ENCODE measurements at regions of chr3 and their contacts with region 1.

Region 1: DNA sequence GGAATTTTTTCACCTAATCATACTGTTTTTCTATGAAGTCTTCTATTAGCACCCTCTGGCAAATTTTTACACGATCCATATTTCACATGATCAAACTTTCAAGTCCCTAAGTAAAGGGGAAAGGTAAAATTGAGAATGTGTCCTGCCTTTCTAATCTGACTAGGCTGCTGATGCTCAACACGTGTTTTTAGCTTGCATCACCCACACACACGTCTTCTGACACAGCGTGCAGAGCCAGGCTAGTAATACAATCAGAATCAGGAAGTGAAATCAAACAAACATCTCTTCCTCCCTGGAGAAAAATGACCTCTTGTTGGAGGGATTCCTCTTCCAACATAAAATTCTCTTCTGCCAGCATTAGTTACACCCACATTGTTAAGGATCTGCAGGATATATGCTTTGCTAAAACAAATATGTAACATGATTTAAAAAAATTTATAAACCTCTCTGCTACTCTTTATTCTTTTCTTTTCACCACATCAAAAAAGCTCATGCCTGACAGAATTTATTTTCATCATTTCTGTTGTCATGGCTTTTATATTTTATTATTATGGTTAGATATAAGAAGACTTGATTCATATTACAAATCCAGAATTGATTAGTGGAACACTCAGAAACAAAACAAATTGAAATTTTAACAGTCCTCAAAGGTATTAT is 122.4 kb downstream of the RAP2B start:
- DNase-seq: peak in 7 of 9 donors; percentile 7 to 53 (median 40)
- ATAC-seq: peak; percentile 85
- H3K4me3 ChIP-seq: no peak overlapping the region
- H3K4me3 Mint-ChIP-seq: peak overlapping the region; percentile 2 to 78 (median 54)
- H3K27ac ChIP-seq: peak overlapping the region; percentile 1
- H3K27ac Mint-ChIP-seq: peak overlapping the region; percentile 60 to 92 (median 74)
- H3K4me1 ChIP-seq: peaks cover 13 to 29% of the 10 kb centered on the region in 2 donors
- H3K4me1 Mint-ChIP-seq: peaks cover 25 to 48% (median 43%) of the 10 kb centered on the region in 7 donors
- H3K27me3 ChIP-seq: no peaks in the 10 kb centered on the region
- H3K27me3 Mint-ChIP-seq: no peaks in the 10 kb centered on the region

Region 2: GRCh38 chr3:153209596-153209995 is 74.8 kb before region 1 on chr3:
- CTCF ChIA-PET with region 1: interaction called, 17 read pairs
- POLR2A ChIA-PET with region 1: no interaction called
- intact Hi-C with region 1: loop called in 1 of 2 experiments (anchors 1 kb)
- DNase-seq: no peak
- ATAC-seq: peak; percentile 85
- H3K4me3 ChIP-seq: no peak overlapping the region
- H3K4me3 Mint-ChIP-seq: peak overlapping the region in 9 of 10 donors; percentile 20 to 80 (median 72)
- H3K27ac ChIP-seq: no peak overlapping the region
- H3K27ac Mint-ChIP-seq: peak overlapping the region in 7 of 9 donors; percentile 0 to 87 (median 71)
- H3K4me1 ChIP-seq: peaks cover 6 to 14% of the 10 kb centered on the region in 2 donors
- H3K4me1 Mint-ChIP-seq: peaks cover 15 to 60% (median 45%) of the 10 kb centered on the region in 7 donors
- H3K27me3 ChIP-seq: no peaks in the 10 kb centered on the region
- H3K27me3 Mint-ChIP-seq: peaks cover 0 to 1% (median 0%) of the 10 kb centered on the region in 5 donors

Region 3: GRCh38 chr3:153595186-153595815 is 310.9 kb after region 1 on chr3:
- CTCF ChIA-PET with region 1: no interaction called
- POLR2A ChIA-PET with region 1: no interaction called
- intact Hi-C with region 1: loop called in 1 of 2 experiments (anchors 5 kb)
- DNase-seq: peak in 5 of 9 donors; percentile 1 to 25 (median 11)
- ATAC-seq: peak; percentile 45
- H3K4me3 ChIP-seq: no peak overlapping the region
- H3K4me3 Mint-ChIP-seq: no peak overlapping the region
- H3K27ac ChIP-seq: no peak overlapping the region
- H3K27ac Mint-ChIP-seq: no peak overlapping the region
- H3K4me1 ChIP-seq: no peaks in the 10 kb centered on the region
- H3K4me1 Mint-ChIP-seq: peaks cover 0 to 15% (median 6%) of the 10 kb centered on the region in 7 donors
- H3K27me3 ChIP-seq: no peaks in the 10 kb centered on the region
- H3K27me3 Mint-ChIP-seq: no peaks in the 10 kb centered on the region

Region 4: GRCh38 chr3:153927107-153927506 is 642.7 kb after region 1 on chr3:
- CTCF ChIA-PET with region 1: no interaction called
- POLR2A ChIA-PET with region 1: no interaction called
- intact Hi-C with region 1: no loop called
- DNase-seq: no peak
- ATAC-seq: no peak
- H3K4me3 ChIP-seq: no peak overlapping the region
- H3K4me3 Mint-ChIP-seq: no peak overlapping the region
- H3K27ac ChIP-seq: no peak overlapping the region
- H3K27ac Mint-ChIP-seq: no peak overlapping the region
- H3K4me1 ChIP-seq: no peaks in the 10 kb centered on the region
- H3K4me1 Mint-ChIP-seq: no peaks in the 10 kb centered on the region
- H3K27me3 ChIP-seq: no peaks in the 10 kb centered on the region
- H3K27me3 Mint-ChIP-seq: peaks cover 0 to 21% (median 10%) of the 10 kb centered on the region in 5 donors

Region 5: GRCh38 chr3:154431043-154431442 is 1146.6 kb after region 1 on chr3:
- CTCF ChIA-PET with region 1: no interaction called
- POLR2A ChIA-PET with region 1: no interaction called
- intact Hi-C with region 1: no loop called
- DNase-seq: no peak
- ATAC-seq: no peak
- H3K4me3 ChIP-seq: no peak overlapping the region
- H3K4me3 Mint-ChIP-seq: no peak overlapping the region
- H3K27ac ChIP-seq: no peak overlapping the region
- H3K27ac Mint-ChIP-seq: no peak overlapping the region
- H3K4me1 ChIP-seq: no peaks in the 10 kb centered on the region
- H3K4me1 Mint-ChIP-seq: peaks cover 0 to 7% (median 0%) of the 10 kb centered on the region in 7 donors
- H3K27me3 ChIP-seq: no peaks in the 10 kb centered on the region
- H3K27me3 Mint-ChIP-seq: peaks cover 39 to 44% (median 42%) of the 10 kb centered on the region in 5 donors